B cell (primary cell): ENCODE measurements at regions of chr1 and their contacts with region 1.

Region 1: GRCh38 chr1:40691538-40692428 is at the start of gene NFYC:
- DNase-seq: peak; percentile 99
- ATAC-seq: peak; percentile 78
- H3K4me3 ChIP-seq: peak within 1 kb of the TSS; percentile 75 to 94 (median 91)
- H3K4me3 Mint-ChIP-seq: peak within 1 kb of the TSS; percentile 98
- H3K27ac ChIP-seq: peak within 1 kb of the TSS; percentile 99 to 100
- H3K27ac Mint-ChIP-seq: peak within 1 kb of the TSS; percentile 97
- H3K4me1 ChIP-seq: peaks cover 35 to 44% of the 10 kb centered on the region in 2 donors
- H3K4me1 Mint-ChIP-seq: peaks cover 66% of the 10 kb centered on the region
- H3K27me3 ChIP-seq: no peaks in the 10 kb centered on the region
- H3K27me3 Mint-ChIP-seq: no peaks in the 10 kb centered on the region
- CTCF ChIP-seq: no peak
- total RNA-seq, gene NFYC: 81.1 and 88.7 TPM in 2 replicates

Region 2: GRCh38 chr1:40476924-40477677 is 214.7 kb before region 1 on chr1 and contains the start of gene ZFP69:
- CTCF ChIA-PET with region 1: no interaction called
- POLR2A ChIA-PET with region 1: no interaction called
- intact Hi-C with region 1: loop called (anchors 10 kb)
- DNase-seq: peak; percentile 83
- ATAC-seq: peak; percentile 95
- H3K4me3 ChIP-seq: peak within 1 kb of the TSS; percentile 58 to 83 (median 81)
- H3K4me3 Mint-ChIP-seq: peak within 1 kb of the TSS; percentile 93
- H3K27ac ChIP-seq: peak within 1 kb of the TSS; percentile 37 to 63
- H3K27ac Mint-ChIP-seq: peak within 1 kb of the TSS; percentile 87
- H3K4me1 ChIP-seq: peaks cover 8 to 14% of the 10 kb centered on the region in 2 donors
- H3K4me1 Mint-ChIP-seq: peaks cover 18% of the 10 kb centered on the region
- H3K27me3 ChIP-seq: no peaks in the 10 kb centered on the region
- H3K27me3 Mint-ChIP-seq: no peaks in the 10 kb centered on the region
- CTCF ChIP-seq: no peak
- total RNA-seq, gene ZFP69: 7.5 TPM in 2 replicates

Region 3: GRCh38 chr1:40709100-40709801 is 17.5 kb after region 1 on chr1:
- CTCF ChIA-PET with region 1: interaction called, 11 read pairs
- POLR2A ChIA-PET with region 1: interaction called, 16 read pairs
- intact Hi-C with region 1: loop called (anchors 1 kb)
- DNase-seq: peak; percentile 92
- ATAC-seq: peak; percentile 90
- H3K4me3 ChIP-seq: peak overlapping the region; percentile 55 to 88 (median 76)
- H3K4me3 Mint-ChIP-seq: peak overlapping the region; percentile 96
- H3K27ac ChIP-seq: peak overlapping the region; percentile 87 to 94
- H3K27ac Mint-ChIP-seq: peak overlapping the region; percentile 96
- H3K4me1 ChIP-seq: peaks cover 58 to 64% of the 10 kb centered on the region in 2 donors
- H3K4me1 Mint-ChIP-seq: peaks cover 74% of the 10 kb centered on the region
- H3K27me3 ChIP-seq: no peaks in the 10 kb centered on the region
- H3K27me3 Mint-ChIP-seq: no peaks in the 10 kb centered on the region
- CTCF ChIP-seq: no peak

Region 4: DNA sequence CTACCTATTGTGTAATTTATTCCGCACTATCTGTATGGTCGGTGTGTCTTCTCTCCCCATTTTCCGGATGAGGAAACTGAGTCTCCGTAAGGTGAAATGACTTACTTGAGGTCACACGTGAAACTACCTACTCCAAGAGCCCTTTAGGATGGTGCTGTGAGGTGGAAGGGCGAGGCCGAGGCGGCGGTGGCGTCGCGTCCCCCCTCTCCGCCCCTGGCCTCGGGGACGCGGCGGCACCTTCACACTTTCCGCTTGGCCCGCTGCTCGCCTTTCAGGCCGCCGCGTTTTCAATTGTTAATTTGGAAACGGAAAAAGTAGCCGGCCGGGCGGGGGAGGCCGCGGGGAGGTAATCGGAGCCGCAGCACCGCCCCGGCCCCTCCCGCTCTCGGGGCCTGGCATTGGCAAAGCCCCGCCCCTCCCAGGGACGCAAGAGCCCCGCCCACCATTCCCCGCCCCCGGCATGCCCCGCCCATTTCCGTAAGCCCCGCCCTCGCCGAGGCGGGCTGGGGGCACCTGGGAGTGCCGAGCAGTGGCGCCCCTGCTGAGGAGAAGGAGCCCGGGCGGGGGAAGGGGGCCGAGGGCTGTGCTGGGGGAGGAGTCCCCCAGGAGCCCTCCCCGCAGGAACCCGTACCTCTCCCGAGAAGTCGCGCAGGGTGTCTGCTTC is 110.4 kb after region 1 on chr1:
- CTCF ChIA-PET with region 1: no interaction called
- POLR2A ChIA-PET with region 1: no interaction called
- intact Hi-C with region 1: loop called (anchors 2 kb)
- DNase-seq: peak; percentile 88
- ATAC-seq: peak; percentile 95
- H3K4me3 ChIP-seq: peak overlapping the region; percentile 45 to 89 (median 58)
- H3K4me3 Mint-ChIP-seq: peak overlapping the region; percentile 86
- H3K27ac ChIP-seq: peak overlapping the region; percentile 25 to 39
- H3K27ac Mint-ChIP-seq: no peak overlapping the region
- H3K4me1 ChIP-seq: peaks cover 16 to 40% of the 10 kb centered on the region in 2 donors
- H3K4me1 Mint-ChIP-seq: peaks cover 30% of the 10 kb centered on the region
- H3K27me3 ChIP-seq: no peaks in the 10 kb centered on the region
- H3K27me3 Mint-ChIP-seq: no peaks in the 10 kb centered on the region
- CTCF ChIP-seq: no peak

Region 5: DNA sequence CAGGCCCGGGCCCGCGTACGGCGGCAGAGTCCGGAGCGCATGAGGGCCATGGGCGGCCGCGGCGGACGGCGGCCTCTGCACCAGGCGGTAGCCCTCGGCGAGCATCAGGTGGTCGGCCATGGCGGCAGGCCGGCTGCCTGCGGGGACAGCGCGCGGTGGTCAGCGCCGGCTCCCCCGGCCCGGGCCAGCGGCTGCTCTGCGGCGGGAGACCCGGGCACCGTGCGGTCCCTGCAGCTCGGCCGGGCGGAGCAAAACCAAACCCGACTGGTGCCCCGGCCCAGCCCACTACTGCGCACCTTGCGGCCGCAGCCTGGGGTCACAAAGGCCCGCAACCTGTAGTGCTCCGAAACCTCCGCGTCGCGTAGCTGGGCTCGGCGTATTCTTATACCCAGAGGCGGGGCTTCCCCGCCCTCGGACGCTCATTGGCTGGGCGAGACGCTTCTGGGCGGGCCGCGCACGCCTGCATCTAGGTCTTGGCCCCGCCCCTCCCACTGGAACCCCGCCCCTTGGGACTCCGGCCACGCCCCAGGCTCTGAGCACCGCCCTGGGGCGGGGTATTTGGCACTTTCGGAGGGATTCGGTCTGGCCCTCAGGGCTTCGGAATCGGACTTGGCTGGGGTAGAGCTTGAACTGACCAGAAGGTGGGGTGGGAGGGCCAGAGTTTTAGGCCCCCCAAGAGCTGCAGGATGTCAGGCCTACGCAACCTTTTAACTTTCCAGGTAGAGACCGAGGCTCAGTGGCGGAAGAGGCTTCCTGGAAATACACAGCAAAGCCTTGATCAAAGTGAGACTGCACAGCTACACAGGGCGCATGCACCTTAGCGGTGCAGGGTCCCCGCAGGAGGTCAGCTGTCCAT is 170.5 kb after region 1 on chr1 and contains the start of gene CITED4:
- CTCF ChIA-PET with region 1: no interaction called
- POLR2A ChIA-PET with region 1: interaction called, 12 read pairs
- intact Hi-C with region 1: loop called (anchors 1 kb)
- DNase-seq: peak; percentile 96
- ATAC-seq: peak; percentile 98
- H3K4me3 ChIP-seq: peak within 1 kb of the TSS; percentile 17 to 67 (median 58)
- H3K4me3 Mint-ChIP-seq: peak within 1 kb of the TSS; percentile 98
- H3K27ac ChIP-seq: peak within 1 kb of the TSS in 1 of 2 donors; percentile 23
- H3K27ac Mint-ChIP-seq: peak within 1 kb of the TSS; percentile 88
- H3K4me1 ChIP-seq: peaks cover 11 to 14% of the 10 kb centered on the region in 2 donors
- H3K4me1 Mint-ChIP-seq: peaks cover 9% of the 10 kb centered on the region
- H3K27me3 ChIP-seq: peaks cover 0 to 28% (median 9%) of the 10 kb centered on the region in 4 experiments
- H3K27me3 Mint-ChIP-seq: peaks cover 25% of the 10 kb centered on the region
- CTCF ChIP-seq: no peak
- total RNA-seq, gene CITED4: 3.1 and 3.2 TPM in 2 replicates

Region 6: DNA sequence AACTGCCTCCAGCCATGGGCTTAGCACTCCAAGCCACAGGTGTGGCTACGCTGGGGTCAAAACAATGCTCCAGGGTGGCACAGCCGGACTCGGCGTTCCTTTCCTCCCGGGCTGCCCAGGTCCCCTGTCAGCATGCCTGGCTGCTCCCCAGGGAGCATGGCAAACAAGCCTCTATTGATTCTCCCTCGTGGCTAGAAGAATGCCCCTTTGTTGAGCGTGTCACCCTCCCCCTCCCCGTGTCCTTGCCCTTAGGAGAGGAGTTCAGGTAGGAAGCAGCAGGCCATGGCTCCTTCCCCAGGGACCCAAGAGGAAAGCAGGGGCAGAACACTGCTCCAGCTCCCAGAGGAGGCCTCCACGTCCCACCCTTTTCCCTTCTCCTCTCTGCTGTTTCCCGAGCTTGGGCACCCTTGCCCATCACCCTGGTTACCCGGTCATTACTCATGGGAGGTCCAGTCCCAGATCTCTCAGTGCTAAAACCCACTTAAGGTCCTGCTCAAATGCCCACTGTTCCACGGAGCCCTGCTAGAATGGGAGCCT is 227.8 kb after region 1 on chr1:
- CTCF ChIA-PET with region 1: no interaction called
- POLR2A ChIA-PET with region 1: no interaction called
- intact Hi-C with region 1: no loop called
- DNase-seq: no peak
- ATAC-seq: no peak
- H3K4me3 ChIP-seq: no peak overlapping the region
- H3K4me3 Mint-ChIP-seq: no peak overlapping the region
- H3K27ac ChIP-seq: no peak overlapping the region
- H3K27ac Mint-ChIP-seq: no peak overlapping the region
- H3K4me1 ChIP-seq: no peaks in the 10 kb centered on the region
- H3K4me1 Mint-ChIP-seq: no peaks in the 10 kb centered on the region
- H3K27me3 ChIP-seq: peaks cover 0 to 2% (median 0%) of the 10 kb centered on the region in 4 experiments
- H3K27me3 Mint-ChIP-seq: peaks cover 15% of the 10 kb centered on the region
- CTCF ChIP-seq: no peak